Activated T-helper 1 cell treated with anti-CD3 and anti-CD28 coated beads, Interleukin-12 subunit alpha, Interleukin-12 subunit beta, Interleukin-2, Interleukin-4 antibody, amounts not matched to agents 30 ng/mL and 10 ng/mL and 1 ng/mL, durations not matched to agents 14 hours and 24 hours and 36 hours (primary cell): ENCODE measurements at regions of chr2 and their contacts with region 1.

Region 1: DNA sequence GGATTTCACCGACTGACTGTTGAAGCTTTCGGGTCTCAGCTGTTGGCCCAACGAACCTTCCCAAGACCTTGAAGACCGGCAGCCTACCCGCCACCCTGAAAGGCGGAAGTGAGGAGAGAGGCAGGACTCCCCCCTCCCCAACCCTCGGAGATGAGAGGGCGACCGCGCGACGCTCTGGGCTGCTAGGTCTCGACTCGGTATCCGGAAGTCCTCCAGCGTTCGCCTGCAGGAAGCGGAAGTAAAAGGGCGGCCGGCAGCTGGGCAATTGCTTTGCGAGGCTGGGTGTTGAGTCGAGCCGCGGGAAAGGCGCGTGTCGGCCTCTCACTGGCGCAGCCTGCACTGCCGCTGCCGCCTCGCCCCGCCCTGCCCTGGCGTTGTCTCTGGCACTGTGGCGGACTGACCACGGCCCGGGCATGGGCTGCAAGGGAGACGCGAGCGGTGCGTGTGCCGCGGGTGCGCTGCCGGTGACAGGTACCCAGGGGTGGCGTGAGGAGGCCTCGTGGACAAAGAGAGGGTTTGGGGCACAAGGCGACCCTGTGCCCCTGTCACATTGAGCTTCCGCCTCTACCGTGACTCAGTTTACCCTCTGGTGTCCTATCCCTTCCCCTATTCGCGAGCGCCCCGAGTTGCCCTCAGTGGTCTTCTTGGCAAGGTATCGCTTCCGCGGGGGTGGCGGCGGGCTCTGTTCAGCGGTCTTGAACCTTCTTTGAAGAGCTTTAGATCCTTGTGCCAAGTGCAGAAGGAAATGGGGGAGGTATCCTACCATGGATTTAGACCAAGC is at the start of gene UGGT1:
- DNase-seq: peak; percentile 93
- H3K4me3 Mint-ChIP-seq: peak within 1 kb of the TSS; percentile 87
- H3K27ac Mint-ChIP-seq: peak within 1 kb of the TSS; percentile 85
- H3K4me1 Mint-ChIP-seq: peaks cover 38% of the 10 kb centered on the region
- H3K27me3 Mint-ChIP-seq: peaks cover 7% of the 10 kb centered on the region
- total RNA-seq, gene UGGT1: 65.2 and 70.7 TPM in 2 replicates

Region 2: GRCh38 chr2:127810619-127811396 is 280.3 kb before region 1 on chr2 and contains the start of gene WDR33:
- intact Hi-C with region 1: loop called (anchors 1 kb)
- DNase-seq: peak; percentile 94
- H3K4me3 Mint-ChIP-seq: peak within 1 kb of the TSS; percentile 95
- H3K27ac Mint-ChIP-seq: peak within 1 kb of the TSS; percentile 94
- H3K4me1 Mint-ChIP-seq: peaks cover 42% of the 10 kb centered on the region
- H3K27me3 Mint-ChIP-seq: peaks cover 6% of the 10 kb centered on the region
- total RNA-seq, gene WDR33: 81.0 and 82.4 TPM in 2 replicates

Region 3: GRCh38 chr2:127857265-127857808 is 233.8 kb before region 1 on chr2:
- intact Hi-C with region 1: loop called (anchors 1 kb)
- DNase-seq: no peak
- H3K4me3 Mint-ChIP-seq: peak overlapping the region; percentile 92
- H3K27ac Mint-ChIP-seq: peak overlapping the region; percentile 78
- H3K4me1 Mint-ChIP-seq: peaks cover 32% of the 10 kb centered on the region
- H3K27me3 Mint-ChIP-seq: no peaks in the 10 kb centered on the region

Region 4: GRCh38 chr2:127884436-127885345 is 206.4 kb before region 1 on chr2:
- intact Hi-C with region 1: loop called (anchors 1 kb)
- DNase-seq: no peak
- H3K4me3 Mint-ChIP-seq: peak overlapping the region; percentile 98
- H3K27ac Mint-ChIP-seq: peak overlapping the region; percentile 95
- H3K4me1 Mint-ChIP-seq: peaks cover 45% of the 10 kb centered on the region
- H3K27me3 Mint-ChIP-seq: no peaks in the 10 kb centered on the region

Region 5: GRCh38 chr2:128232965-128233789 is 142.0 kb after region 1 on chr2:
- intact Hi-C with region 1: loop called (anchors 1 kb)
- DNase-seq: peak; percentile 78
- H3K4me3 Mint-ChIP-seq: peak overlapping the region; percentile 82
- H3K27ac Mint-ChIP-seq: peak overlapping the region; percentile 52
- H3K4me1 Mint-ChIP-seq: peaks cover 5% of the 10 kb centered on the region
- H3K27me3 Mint-ChIP-seq: peaks cover 15% of the 10 kb centered on the region